Psoas muscle (tissue), 8 donors: ENCODE measurements at regions of chr7 and their contacts with region 1.

Region 1: GRCh38 chr7:137656227-137656849 is 190.4 kb downstream of the DGKI start:
- DNase-seq: peak; percentile 73 to 80
- ATAC-seq: peak in 3 of 4 donors; percentile 68 to 84 (median 76)
- H3K4me3 ChIP-seq: no peak overlapping the region
- H3K27ac ChIP-seq: no peak overlapping the region
- H3K4me1 ChIP-seq: no peaks in the 10 kb centered on the region
- H3K27me3 ChIP-seq: peaks cover 0 to 4% (median 0%) of the 10 kb centered on the region in 3 donors
- CTCF ChIP-seq: peak; percentile 77

Region 2: GRCh38 chr7:138008547-138009349 is 352.4 kb after region 1 on chr7:
- intact Hi-C with region 1: loop called in 1 of 2 experiments (anchors 2 kb)
- DNase-seq: no peak
- ATAC-seq: peak; percentile 54 to 85 (median 66)
- H3K4me3 ChIP-seq: no peak overlapping the region
- H3K27ac ChIP-seq: no peak overlapping the region
- H3K4me1 ChIP-seq: no peaks in the 10 kb centered on the region
- H3K27me3 ChIP-seq: no peaks in the 10 kb centered on the region
- CTCF ChIP-seq: peak; percentile 96